CD4-positive, alpha-beta memory T cell (primary cell): ENCODE measurements at regions of chr16 and their contacts with region 1.

Region 1: DNA sequence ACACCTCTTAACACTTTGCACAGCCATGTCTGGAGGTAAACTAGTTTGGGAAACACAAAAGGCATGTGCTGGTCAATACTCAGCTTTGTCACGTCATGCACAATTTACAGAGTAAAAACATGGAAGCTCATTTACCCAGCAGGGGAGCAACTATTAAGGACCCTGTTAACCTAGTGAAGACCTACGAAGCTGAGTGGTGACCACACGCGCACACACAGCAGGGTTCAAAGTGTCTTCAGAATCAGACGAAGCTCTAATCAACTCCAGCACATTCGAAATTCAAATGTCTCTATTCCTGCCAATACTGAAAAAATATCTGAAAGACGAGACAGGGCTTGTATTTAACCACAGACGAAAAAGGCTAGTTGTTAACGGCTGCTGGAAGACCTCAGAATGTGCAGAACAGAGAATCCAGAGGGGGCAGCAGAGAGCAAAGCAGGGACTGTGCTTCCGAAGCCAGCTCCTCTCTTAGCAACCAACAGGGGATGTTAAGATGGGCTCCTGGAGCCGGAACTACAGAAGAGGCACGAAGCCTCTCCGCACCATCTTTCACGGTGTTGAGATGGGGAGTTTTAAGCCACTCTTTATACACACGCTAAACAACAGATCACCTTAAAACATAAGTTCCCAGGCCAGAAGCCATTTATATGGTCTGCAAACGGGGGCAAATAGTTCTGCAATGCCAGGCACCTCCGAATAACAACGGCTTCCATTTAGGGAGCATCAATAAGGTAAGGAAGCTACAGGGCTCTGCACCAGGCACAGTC is 45.7 kb downstream of the CMTM4 start:
- DNase-seq: peak; percentile 75 to 84 (median 80)
- H3K4me3 ChIP-seq: peak overlapping the region in 1 of 2 donors; percentile 25
- H3K4me3 Mint-ChIP-seq: peak overlapping the region; percentile 50 to 90 (median 74)
- H3K27ac ChIP-seq: no peak overlapping the region
- H3K27ac Mint-ChIP-seq: peak overlapping the region in 6 of 7 donors; percentile 2 to 90 (median 60)
- H3K4me1 ChIP-seq: peaks cover 6% of the 10 kb centered on the region
- H3K4me1 Mint-ChIP-seq: peaks cover 6 to 11% (median 10%) of the 10 kb centered on the region in 4 donors
- H3K27me3 ChIP-seq: no peaks in the 10 kb centered on the region
- H3K27me3 Mint-ChIP-seq: peaks cover 0 to 6% of the 10 kb centered on the region in 2 donors

Region 2: DNA sequence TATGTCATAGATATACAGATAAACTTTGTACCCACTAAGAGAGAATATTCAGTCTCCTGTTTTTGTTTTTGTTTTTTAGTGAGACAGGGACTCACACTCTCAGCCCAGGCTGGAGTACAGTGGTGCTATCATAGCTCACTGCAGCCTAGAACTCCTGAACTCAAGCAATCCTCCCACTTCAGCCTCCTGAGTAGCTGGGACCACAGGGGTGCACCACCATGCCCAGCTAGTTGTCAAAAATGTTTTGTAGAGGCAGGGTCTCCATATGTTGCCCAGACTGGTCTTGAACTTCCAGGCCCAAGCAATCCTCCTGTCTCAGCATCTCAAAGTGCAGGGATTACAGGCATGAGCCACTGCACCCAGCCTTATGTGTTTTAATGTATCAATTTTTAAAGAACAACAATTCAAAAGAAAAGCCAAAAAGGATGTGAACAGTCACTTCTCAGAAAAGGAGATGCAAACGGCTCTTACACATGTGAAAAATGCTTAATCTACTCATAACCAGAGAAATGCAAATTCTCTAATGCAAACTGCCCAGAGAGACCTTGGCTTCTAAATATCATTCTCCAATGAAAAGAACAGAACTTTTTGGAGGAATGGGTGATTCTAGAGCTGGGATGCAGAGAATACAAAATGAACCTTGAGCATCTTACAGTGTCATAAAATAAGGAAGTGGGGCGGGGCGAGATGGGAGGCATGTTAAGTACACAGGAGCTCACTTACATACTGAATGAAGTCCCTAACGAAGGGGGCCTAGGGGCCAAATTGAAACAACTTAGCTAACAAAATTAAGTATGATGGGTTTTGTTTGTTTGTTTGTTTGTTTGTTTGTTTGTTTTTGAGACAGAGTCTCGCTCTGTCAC is 53.7 kb before region 1 on chr16:
- CTCF ChIA-PET with region 1: no interaction called
- POLR2A ChIA-PET with region 1: no interaction called
- intact Hi-C with region 1: no loop called
- DNase-seq: no peak
- H3K4me3 ChIP-seq: no peak overlapping the region
- H3K4me3 Mint-ChIP-seq: peak overlapping the region in 3 of 8 donors; percentile 31 to 72 (median 43)
- H3K27ac ChIP-seq: no peak overlapping the region
- H3K27ac Mint-ChIP-seq: peak overlapping the region; percentile 23 to 81 (median 58)
- H3K4me1 ChIP-seq: peaks cover 26% of the 10 kb centered on the region
- H3K4me1 Mint-ChIP-seq: peaks cover 15 to 30% (median 20%) of the 10 kb centered on the region in 4 donors
- H3K27me3 ChIP-seq: no peaks in the 10 kb centered on the region
- H3K27me3 Mint-ChIP-seq: no peaks in the 10 kb centered on the region

Region 3: DNA sequence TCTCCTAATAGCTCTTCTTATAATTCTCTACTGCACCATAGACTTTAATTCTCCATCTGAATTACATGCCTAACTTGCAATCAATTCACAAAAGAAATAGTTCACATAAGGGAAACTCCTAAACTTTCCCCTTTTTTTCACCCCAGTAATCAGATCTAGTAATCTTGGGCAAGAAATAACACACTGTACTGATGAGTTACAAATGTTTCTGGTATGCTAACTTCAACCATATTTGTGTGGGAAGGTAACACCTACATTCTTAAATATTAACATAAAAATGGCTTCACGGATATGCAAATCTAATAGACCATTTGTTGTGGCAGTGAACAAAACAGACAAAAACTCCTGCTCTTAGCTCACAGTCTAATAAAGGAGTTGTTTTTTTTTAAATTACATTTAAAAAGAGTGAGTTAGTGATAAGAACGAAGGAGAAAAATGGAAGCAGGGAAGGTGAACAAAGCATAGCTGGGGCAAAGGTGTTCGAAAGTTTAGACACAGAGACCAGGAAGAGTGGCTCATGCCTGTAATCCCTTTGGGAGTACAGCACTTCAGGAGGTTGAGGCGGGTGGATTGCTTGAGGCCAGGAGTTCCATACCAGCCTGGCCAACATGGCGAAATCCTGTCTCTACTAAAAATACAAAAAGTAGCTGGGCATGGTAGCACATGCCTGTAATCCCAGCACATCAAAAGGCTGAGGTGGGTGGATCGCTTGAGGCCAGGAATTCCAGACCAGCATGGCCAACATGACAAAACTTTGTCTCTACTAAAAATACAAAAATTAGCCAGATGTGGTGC is 11.6 kb before region 1 on chr16:
- CTCF ChIA-PET with region 1: interaction called, 13 read pairs
- POLR2A ChIA-PET with region 1: no interaction called
- intact Hi-C with region 1: no loop called
- DNase-seq: no peak
- H3K4me3 ChIP-seq: no peak overlapping the region
- H3K4me3 Mint-ChIP-seq: no peak overlapping the region
- H3K27ac ChIP-seq: no peak overlapping the region
- H3K27ac Mint-ChIP-seq: no peak overlapping the region
- H3K4me1 ChIP-seq: no peaks in the 10 kb centered on the region
- H3K4me1 Mint-ChIP-seq: no peaks in the 10 kb centered on the region
- H3K27me3 ChIP-seq: no peaks in the 10 kb centered on the region
- H3K27me3 Mint-ChIP-seq: peaks cover 0 to 3% of the 10 kb centered on the region in 2 donors

Region 4: DNA sequence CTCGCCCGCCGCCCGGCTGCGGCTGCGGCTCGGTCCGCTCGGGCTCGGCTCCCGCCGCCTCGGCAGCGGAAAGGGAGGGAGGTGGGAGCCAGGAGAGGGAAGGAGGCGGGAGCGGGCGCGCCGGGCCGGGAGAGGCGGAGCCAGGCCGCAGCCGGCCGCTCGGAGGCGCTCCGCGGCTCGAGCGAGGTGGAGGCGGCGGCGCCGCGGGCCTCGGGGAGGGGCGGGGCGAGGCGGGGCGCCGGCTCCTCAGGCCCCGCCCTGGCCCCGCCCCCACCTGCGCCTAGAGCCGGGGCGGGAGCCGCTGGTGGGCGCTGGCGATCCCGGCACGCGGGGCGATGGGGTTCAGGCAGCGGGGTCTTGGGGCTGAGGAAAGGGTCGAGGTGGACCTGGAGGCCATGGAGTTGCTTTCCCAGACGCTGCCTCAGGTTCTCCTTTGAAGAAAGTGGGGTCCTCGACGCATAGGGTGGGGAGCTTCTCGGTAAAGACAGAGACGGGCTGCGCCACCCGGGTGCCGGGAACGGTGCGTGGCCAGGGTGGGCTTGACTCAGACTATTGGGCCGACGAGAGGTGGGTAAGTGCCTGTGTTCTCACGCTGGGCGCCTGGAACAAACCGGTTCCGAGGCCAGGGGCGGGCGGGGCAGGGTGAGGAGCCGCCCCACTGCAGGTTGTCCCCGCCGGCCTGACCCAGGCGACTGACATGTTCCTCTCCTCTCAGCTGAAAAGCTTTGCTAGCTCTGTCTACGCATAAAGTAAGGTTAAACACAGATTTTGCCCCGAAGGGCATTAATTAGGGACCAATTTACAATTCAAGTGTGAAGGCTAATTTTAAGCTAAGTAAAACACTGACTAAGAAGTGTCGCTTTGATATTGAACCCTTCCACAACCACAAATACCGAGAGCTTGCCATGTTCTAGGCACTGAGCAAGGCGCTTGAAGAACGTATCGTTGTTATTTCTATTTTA is 46.1 kb after region 1 on chr16 and contains the start of gene CMTM4:
- CTCF ChIA-PET with region 1: interaction called, 10 read pairs
- POLR2A ChIA-PET with region 1: no interaction called
- intact Hi-C with region 1: no loop called
- DNase-seq: peak; percentile 68 to 80 (median 72)
- H3K4me3 ChIP-seq: peak within 1 kb of the TSS in 1 of 2 donors; percentile 57
- H3K4me3 Mint-ChIP-seq: peak within 1 kb of the TSS; percentile 78 to 87 (median 85)
- H3K27ac ChIP-seq: peak within 1 kb of the TSS; percentile 27
- H3K27ac Mint-ChIP-seq: peak within 1 kb of the TSS in 5 of 7 donors; percentile 23 to 78 (median 66)
- H3K4me1 ChIP-seq: peaks cover 8% of the 10 kb centered on the region
- H3K4me1 Mint-ChIP-seq: peaks cover 5 to 20% (median 12%) of the 10 kb centered on the region in 4 donors
- H3K27me3 ChIP-seq: no peaks in the 10 kb centered on the region
- H3K27me3 Mint-ChIP-seq: peaks cover 0 to 5% of the 10 kb centered on the region in 2 donors
- total RNA-seq, gene CMTM4: 2.0 to 2.2 TPM

Region 5: GRCh38 chr16:66728117-66728787 is 77.4 kb after region 1 on chr16:
- CTCF ChIA-PET with region 1: interaction called, 8 read pairs
- POLR2A ChIA-PET with region 1: no interaction called
- intact Hi-C with region 1: loop called (anchors 1 kb)
- DNase-seq: peak in 4 of 5 donors; percentile 42 to 56 (median 46)
- H3K4me3 ChIP-seq: no peak overlapping the region
- H3K4me3 Mint-ChIP-seq: no peak overlapping the region
- H3K27ac ChIP-seq: no peak overlapping the region
- H3K27ac Mint-ChIP-seq: peak overlapping the region in 5 of 7 donors; percentile 12 to 73 (median 52)
- H3K4me1 ChIP-seq: no peaks in the 10 kb centered on the region
- H3K4me1 Mint-ChIP-seq: peaks cover 3 to 6% (median 5%) of the 10 kb centered on the region in 4 donors
- H3K27me3 ChIP-seq: no peaks in the 10 kb centered on the region
- H3K27me3 Mint-ChIP-seq: no peaks in the 10 kb centered on the region

Region 6: GRCh38 chr16:66751303-66751991 is 100.6 kb after region 1 on chr16 and contains the start of gene DYNC1LI2:
- CTCF ChIA-PET with region 1: no interaction called
- POLR2A ChIA-PET with region 1: interaction called, 3 read pairs
- intact Hi-C with region 1: loop called (anchors 5 kb)
- DNase-seq: peak; percentile 82 to 91 (median 87)
- H3K4me3 ChIP-seq: peak within 1 kb of the TSS; percentile 64 to 73
- H3K4me3 Mint-ChIP-seq: peak within 1 kb of the TSS; percentile 91 to 95 (median 93)
- H3K27ac ChIP-seq: peak within 1 kb of the TSS; percentile 85
- H3K27ac Mint-ChIP-seq: peak within 1 kb of the TSS; percentile 85 to 95 (median 94)
- H3K4me1 ChIP-seq: peaks cover 34% of the 10 kb centered on the region
- H3K4me1 Mint-ChIP-seq: peaks cover 31 to 46% (median 37%) of the 10 kb centered on the region in 4 donors
- H3K27me3 ChIP-seq: no peaks in the 10 kb centered on the region
- H3K27me3 Mint-ChIP-seq: peaks cover 0 to 4% of the 10 kb centered on the region in 2 donors
- total RNA-seq, gene DYNC1LI2: 73.2 to 78.1 TPM